Activated CD4-positive, alpha-beta T cell treated with anti-CD3 and anti-CD28 coated beads, Interleukin-2, amount 10 ng/mL, durations not matched to agents 7 days and 5 days (primary cell): ENCODE measurements at regions of chr9 and their contacts with region 1.

Region 1: DNA sequence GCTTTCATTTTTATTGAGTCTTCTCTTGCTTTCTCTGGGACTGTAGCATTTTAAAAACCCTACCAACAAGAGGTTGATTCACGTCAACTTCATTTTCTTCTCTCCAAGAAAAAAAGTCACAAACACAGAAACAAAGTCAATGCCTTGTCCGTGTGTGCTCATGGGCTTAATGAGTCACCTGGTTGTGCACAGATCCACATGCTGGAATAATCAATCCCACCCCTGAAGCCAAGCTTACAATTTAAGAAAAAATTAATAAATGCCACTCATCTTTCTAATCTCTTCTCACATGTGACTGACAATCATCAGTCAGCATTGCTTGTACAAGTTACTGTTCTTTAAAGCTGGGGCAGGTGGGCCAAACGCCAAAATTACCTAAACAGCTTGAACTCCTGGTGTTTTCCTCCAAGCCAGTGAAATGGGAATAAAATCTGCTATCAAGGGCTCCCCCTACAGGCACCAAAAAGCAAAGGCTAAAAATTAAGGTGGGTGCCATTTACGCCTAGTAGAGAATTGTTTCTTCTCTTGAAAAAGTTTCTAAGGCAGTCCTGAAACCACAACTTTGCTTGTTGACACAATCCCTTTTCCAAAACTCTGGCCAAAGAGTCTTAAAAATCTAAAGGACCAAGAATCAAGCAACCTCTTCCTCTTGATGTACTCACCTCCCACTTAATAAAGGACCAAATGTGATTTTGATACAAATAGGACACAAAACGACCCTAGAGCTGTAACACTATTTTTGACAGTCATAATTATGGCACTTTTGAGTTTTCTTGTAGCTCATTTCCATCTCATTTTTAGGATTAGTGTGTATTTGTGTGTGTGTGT is 21.3 kb downstream of the TRMO start:
- DNase-seq: peak; percentile 37
- H3K4me3 Mint-ChIP-seq: no peak overlapping the region
- H3K27ac Mint-ChIP-seq: peak overlapping the region; percentile 72
- H3K4me1 Mint-ChIP-seq: peaks cover 51% of the 10 kb centered on the region
- H3K27me3 Mint-ChIP-seq: no peaks in the 10 kb centered on the region

Region 2: GRCh38 chr9:97890038-97890437 is 10.9 kb before region 1 on chr9:
- CTCF ChIA-PET with region 1: interaction called, 42 read pairs
- POLR2A ChIA-PET with region 1: no interaction called
- DNase-seq: peak; percentile 75
- H3K4me3 Mint-ChIP-seq: no peak overlapping the region
- H3K27ac Mint-ChIP-seq: peak overlapping the region; percentile 79
- H3K4me1 Mint-ChIP-seq: peaks cover 9% of the 10 kb centered on the region
- H3K27me3 Mint-ChIP-seq: peaks cover 3% of the 10 kb centered on the region